Transverse colon (tissue), 4 donors: ENCODE measurements at regions of chr7 and their contacts with region 1.

Region 1: GRCh38 chr7:40057292-40057691 is 77.1 kb downstream of the MPLKIP start:
- DNase-seq: peak; percentile 37
- H3K4me3 ChIP-seq: no peak overlapping the region
- H3K27ac ChIP-seq: no peak overlapping the region
- H3K4me1 ChIP-seq: peaks cover 0 to 16% (median 7%) of the 10 kb centered on the region in 4 donors
- H3K27me3 ChIP-seq: no peaks in the 10 kb centered on the region
- CTCF ChIP-seq: no peak
- EP300 ChIP-seq: no peak
- POLR2A ChIP-seq: no peak

Region 2: GRCh38 chr7:39527296-39527695 is 530.0 kb before region 1 on chr7:
- in situ Hi-C with region 1: no loop called
- intact Hi-C with region 1: no loop called
- DNase-seq: no peak
- H3K4me3 ChIP-seq: no peak overlapping the region
- H3K27ac ChIP-seq: no peak overlapping the region
- H3K4me1 ChIP-seq: peaks cover 0 to 25% (median 3%) of the 10 kb centered on the region in 4 donors
- H3K27me3 ChIP-seq: no peaks in the 10 kb centered on the region
- CTCF ChIP-seq: no peak
- EP300 ChIP-seq: no peak
- POLR2A ChIP-seq: no peak

Region 3: DNA sequence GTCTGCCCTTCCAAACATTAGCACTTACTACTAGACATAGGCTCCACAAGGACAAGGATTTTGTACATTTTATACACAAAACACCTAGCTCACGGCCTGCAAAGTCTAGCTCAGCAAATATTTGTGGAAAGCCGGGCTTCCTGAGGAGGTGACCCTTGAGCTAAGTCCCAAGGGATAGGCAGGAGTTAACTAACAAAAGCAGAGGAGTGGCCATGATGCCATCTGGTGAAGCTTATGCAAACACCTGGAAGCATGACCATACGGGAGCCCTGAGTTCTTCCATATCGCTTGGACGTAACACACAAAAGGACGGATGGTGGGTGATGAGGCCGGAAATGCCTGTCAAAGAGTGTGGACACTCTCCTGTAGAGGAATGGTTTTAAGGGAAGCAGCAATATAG is 517.0 kb before region 1 on chr7:
- in situ Hi-C with region 1: no loop called
- intact Hi-C with region 1: no loop called
- DNase-seq: peak; percentile 14
- H3K4me3 ChIP-seq: no peak overlapping the region
- H3K27ac ChIP-seq: peak overlapping the region in 3 of 4 donors; percentile 30 to 39 (median 31)
- H3K4me1 ChIP-seq: peaks cover 0 to 20% (median 8%) of the 10 kb centered on the region in 4 donors
- H3K27me3 ChIP-seq: no peaks in the 10 kb centered on the region
- CTCF ChIP-seq: no peak
- EP300 ChIP-seq: no peak
- POLR2A ChIP-seq: no peak

Region 4: DNA sequence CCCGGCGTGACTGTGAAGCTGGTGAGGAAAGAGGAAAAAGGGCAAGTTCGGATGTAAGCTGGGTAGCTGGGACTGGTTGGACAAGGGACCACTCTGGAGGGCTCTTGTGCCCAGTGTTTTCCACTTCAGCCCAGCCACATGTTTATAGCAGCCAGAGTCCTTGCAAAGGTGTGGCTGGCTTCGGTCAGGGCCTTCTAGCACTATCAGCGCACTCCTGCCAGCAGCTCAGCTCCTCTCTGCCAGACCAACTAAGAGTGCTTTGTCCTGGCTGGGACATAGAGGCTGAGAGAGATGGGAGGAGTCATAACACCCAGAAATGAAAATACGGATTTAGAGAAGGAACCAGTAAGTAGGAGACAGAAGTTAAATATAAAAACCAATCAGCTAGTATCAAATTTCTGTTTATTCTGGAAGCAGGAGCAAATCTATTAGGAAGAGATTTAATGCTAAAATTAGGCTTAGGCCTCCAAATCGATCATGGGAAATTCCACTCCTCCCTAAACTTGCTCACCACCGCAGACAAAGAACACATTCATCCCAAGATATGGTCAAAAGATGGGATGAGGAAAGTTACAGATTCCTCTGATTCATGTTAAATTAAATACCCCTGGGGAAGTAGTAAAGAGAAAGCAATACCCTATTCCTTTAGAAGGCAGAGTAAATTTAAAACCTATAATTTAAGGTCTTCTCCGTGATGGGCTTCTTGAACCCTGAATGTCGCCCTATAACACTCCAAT is 298.9 kb before region 1 on chr7:
- in situ Hi-C with region 1: no loop called
- intact Hi-C with region 1: no loop called
- DNase-seq: no peak
- H3K4me3 ChIP-seq: no peak overlapping the region
- H3K27ac ChIP-seq: no peak overlapping the region
- H3K4me1 ChIP-seq: peaks cover 0 to 5% (median 0%) of the 10 kb centered on the region in 4 donors
- H3K27me3 ChIP-seq: no peaks in the 10 kb centered on the region
- CTCF ChIP-seq: no peak
- EP300 ChIP-seq: no peak
- POLR2A ChIP-seq: no peak

Region 5: DNA sequence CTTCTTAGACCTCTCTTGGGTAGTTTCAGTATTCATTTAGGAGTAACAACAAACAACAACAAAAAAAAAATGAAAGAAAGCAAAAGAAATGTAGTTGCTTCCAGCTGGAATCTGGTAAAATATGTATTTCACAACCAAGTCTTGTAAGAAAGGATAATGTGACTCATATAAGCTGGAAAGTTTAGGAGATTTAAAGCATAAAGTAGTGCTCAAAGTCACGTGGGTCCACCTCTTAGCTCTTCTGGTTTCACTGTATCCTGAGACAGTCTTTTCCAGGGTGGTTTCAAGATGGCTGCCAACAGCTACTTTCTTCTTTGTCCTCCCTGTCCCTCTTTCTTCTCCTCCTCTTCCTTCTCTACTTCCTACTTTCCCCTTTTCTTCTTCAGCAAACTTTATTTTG is 176.7 kb before region 1 on chr7:
- in situ Hi-C with region 1: loop called in 1 of 4 experiments (anchors 25 kb)
- intact Hi-C with region 1: no loop called
- DNase-seq: no peak
- H3K4me3 ChIP-seq: no peak overlapping the region
- H3K27ac ChIP-seq: no peak overlapping the region
- H3K4me1 ChIP-seq: no peaks in the 10 kb centered on the region
- H3K27me3 ChIP-seq: no peaks in the 10 kb centered on the region
- CTCF ChIP-seq: no peak
- EP300 ChIP-seq: no peak
- POLR2A ChIP-seq: no peak

Region 6: DNA sequence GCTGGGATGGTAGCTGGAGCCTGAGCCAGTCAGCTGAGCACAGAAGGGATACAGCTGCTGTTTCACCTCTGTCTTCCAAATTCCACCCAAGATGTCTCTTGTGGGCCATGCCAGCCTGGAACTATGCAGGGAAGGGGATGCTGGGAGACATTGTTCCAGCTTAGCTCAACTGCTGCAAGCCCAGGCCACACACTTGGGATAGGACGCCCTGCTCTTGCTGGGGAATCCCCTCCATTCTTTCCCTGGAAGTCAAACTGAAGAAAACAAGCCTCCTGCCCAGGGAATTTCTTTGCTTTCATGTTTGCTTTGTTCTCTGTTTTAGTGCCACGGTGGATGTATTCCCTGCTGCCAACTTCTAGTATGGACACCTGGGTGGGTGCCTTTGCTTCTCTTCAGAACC is 162.4 kb before region 1 on chr7:
- in situ Hi-C with region 1: loop called in 3 of 4 experiments (anchors 5 to 25 kb)
- intact Hi-C with region 1: loop called (anchors 5 kb)
- DNase-seq: no peak
- H3K4me3 ChIP-seq: no peak overlapping the region
- H3K27ac ChIP-seq: no peak overlapping the region
- H3K4me1 ChIP-seq: peaks cover 0 to 6% (median 0%) of the 10 kb centered on the region in 4 donors
- H3K27me3 ChIP-seq: no peaks in the 10 kb centered on the region
- CTCF ChIP-seq: no peak
- EP300 ChIP-seq: no peak
- POLR2A ChIP-seq: no peak

Region 7: GRCh38 chr7:39948956-39949928 is 108.0 kb before region 1 on chr7:
- in situ Hi-C with region 1: loop called in 1 of 4 experiments (anchors 5 kb)
- intact Hi-C with region 1: loop called (anchors 5 kb)
- DNase-seq: peak; percentile 98
- H3K4me3 ChIP-seq: peak overlapping the region; percentile 82 to 97 (median 86)
- H3K27ac ChIP-seq: peak overlapping the region; percentile 99 to 100 (median 100)
- H3K4me1 ChIP-seq: peaks cover 3 to 23% (median 19%) of the 10 kb centered on the region in 4 donors
- H3K27me3 ChIP-seq: no peaks in the 10 kb centered on the region
- CTCF ChIP-seq: no peak
- EP300 ChIP-seq: no peak
- POLR2A ChIP-seq: peak; percentile 95